Activated CD8-positive, alpha-beta T cell treated with anti-CD3 and anti-CD28 coated beads for 36 hours (primary cell): ENCODE measurements at regions of chr11 and their contacts with region 1.

Region 1: GRCh38 chr11:124934862-124935547 is 842 bp downstream of the HEPACAM start:
- DNase-seq: no peak
- ATAC-seq: no peak
- H3K4me3 Mint-ChIP-seq: no peak overlapping the region
- H3K27ac Mint-ChIP-seq: no peak overlapping the region
- H3K4me1 Mint-ChIP-seq: peaks cover 8% of the 10 kb centered on the region
- H3K27me3 Mint-ChIP-seq: peaks cover 2% of the 10 kb centered on the region
- CTCF ChIP-seq: no peak

Region 2: GRCh38 chr11:124778281-124778680 is 156.7 kb before region 1 on chr11:
- CTCF ChIA-PET with region 1: no interaction called
- POLR2A ChIA-PET with region 1: no interaction called
- intact Hi-C with region 1: no loop called
- DNase-seq: no peak
- ATAC-seq: no peak
- H3K4me3 Mint-ChIP-seq: no peak overlapping the region
- H3K27ac Mint-ChIP-seq: no peak overlapping the region
- H3K4me1 Mint-ChIP-seq: peaks cover 11% of the 10 kb centered on the region
- H3K27me3 Mint-ChIP-seq: no peaks in the 10 kb centered on the region
- CTCF ChIP-seq: no peak

Region 3: GRCh38 chr11:124953753-124954589 is 19.0 kb after region 1 on chr11 and contains the start of gene CCDC15:
- CTCF ChIA-PET with region 1: interaction called, 5 read pairs
- POLR2A ChIA-PET with region 1: interaction called, 10 read pairs
- intact Hi-C with region 1: no loop called
- DNase-seq: peak; percentile 98
- ATAC-seq: peak; percentile 97
- H3K4me3 Mint-ChIP-seq: no peak within 1 kb of the TSS
- H3K27ac Mint-ChIP-seq: no peak within 1 kb of the TSS
- H3K4me1 Mint-ChIP-seq: peaks cover 9% of the 10 kb centered on the region
- H3K27me3 Mint-ChIP-seq: no peaks in the 10 kb centered on the region
- CTCF ChIP-seq: no peak
- total RNA-seq, gene CCDC15: 4.2 to 4.8 TPM